Posterior vena cava (tissue), 2 donors: ENCODE measurements at regions of chr15 and their contacts with region 1.

Region 1: GRCh38 chr15:100833417-100834389 is 45.9 kb upstream of the ALDH1A3 start:
- DNase-seq: no peak

Region 2: DNA sequence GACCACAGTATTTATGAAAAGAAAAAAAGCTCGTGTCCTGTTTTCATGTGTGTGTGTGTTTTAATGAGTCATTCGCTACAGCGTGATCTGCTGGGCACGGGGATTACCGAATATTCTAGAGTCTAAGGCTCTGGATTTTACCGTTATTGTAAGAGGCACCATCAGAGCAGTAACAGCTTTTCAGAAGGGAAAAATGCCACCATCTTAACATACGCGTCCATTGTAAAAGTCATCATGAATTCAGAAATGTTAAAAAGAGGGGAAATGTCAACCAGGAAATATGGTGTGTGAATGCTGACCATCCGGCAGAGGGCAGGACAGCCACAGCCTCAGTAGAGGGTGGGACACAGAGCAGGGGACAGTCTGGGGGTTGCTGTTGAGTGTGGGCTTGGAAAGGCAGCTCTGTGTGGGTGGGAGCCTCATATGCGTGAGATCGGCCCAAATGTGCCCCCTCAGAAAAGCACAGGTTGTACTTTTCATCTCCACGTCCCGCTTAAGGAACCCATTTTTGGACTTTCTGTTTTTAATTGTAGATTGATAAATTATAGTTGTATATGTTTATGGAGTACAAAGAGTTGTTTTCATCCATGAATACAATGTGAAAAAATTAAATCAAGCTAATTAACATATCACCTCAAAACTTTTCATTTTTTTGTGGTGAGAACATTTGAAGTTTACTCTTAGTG is 161.7 kb before region 1 on chr15:
- intact Hi-C with region 1: loop called in 1 of 2 experiments (anchors 5 kb)
- DNase-seq: no peak

Region 3: GRCh38 chr15:100753503-100753902 is 80.2 kb before region 1 on chr15:
- intact Hi-C with region 1: no loop called
- DNase-seq: no peak